ENCODE measurements at regions of chr22 and their contacts with region 1.

Region 1: DNA sequence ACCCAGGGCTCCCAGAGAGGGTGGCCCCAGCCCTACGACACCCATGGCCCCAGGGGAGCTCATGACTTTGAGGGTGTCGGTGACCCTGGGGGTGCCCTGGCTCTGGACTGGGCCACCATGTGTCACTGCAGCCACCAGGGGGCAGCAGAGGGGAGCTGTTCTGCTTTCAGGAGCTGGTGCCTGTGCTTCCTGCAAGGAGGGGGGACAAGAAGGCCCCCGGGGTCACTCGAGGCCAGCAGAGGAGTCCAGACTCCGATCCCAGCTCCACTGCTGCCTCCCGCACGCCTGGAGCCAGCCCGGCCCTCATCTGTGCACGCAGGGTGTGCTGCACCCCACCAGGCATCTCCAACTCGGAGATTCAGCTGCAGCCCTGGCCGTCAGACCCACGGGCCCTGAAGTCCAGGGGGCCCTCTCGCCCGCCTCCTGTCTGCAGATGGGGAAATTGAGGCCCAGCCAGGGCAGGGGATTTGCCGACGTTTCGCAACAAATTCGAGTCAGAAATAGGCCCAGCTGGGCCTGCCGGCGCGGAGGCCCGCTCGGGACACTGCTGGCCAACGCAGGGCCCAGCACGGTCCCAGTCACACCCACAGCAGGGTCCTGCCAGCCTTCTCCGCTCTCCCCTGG is 29.5 kb upstream of the WNT7B start:
- DNase-seq: peak; percentile 80
- H3K4me3 ChIP-seq: no peak overlapping the region
- H3K27ac ChIP-seq: peak overlapping the region; percentile 47
- H3K4me1 ChIP-seq: peaks cover 39% of the 10 kb centered on the region
- H3K27me3 ChIP-seq: no peaks in the 10 kb centered on the region
- CTCF ChIP-seq: peak; percentile 98

Region 2: DNA sequence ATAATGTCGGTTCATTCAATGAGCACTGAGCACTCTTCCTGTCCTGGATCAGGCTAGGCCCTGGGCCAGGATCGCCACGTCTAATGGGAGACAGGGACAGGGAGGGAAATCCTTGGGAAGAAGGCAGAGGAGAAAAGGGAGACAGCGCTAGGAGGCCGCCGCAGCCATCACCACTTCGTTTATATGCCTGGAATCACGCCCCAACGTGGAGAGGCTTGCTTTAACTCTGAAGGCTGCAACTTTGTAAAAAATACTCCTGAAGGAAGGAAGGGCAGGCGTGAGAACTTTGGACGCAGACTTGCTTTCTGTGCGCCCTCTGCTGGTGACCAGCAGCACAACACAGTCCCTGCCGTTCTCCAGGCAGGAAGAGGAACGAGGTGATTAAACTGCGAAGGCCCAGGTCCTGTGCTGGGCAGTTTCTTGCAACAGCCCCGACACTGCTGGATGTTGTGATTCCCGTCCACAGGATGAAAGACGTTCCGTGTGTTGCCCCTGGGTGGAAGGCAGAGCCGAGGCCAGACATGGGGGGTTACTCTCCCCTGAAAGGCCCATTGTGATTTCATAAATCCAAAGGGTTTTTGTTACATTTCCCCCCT is 570.8 kb before region 1 on chr22:
- CTCF ChIA-PET with region 1: no interaction called
- POLR2A ChIA-PET with region 1: no interaction called
- intact Hi-C with region 1: no loop called
- DNase-seq: peak; percentile 89
- H3K4me3 ChIP-seq: no peak overlapping the region
- H3K27ac ChIP-seq: no peak overlapping the region
- H3K4me1 ChIP-seq: peaks cover 4% of the 10 kb centered on the region
- H3K27me3 ChIP-seq: no peaks in the 10 kb centered on the region
- CTCF ChIP-seq: peak; percentile 98

Region 3: GRCh38 chr22:45688606-45689080 is 317.8 kb before region 1 on chr22:
- CTCF ChIA-PET with region 1: no interaction called
- POLR2A ChIA-PET with region 1: no interaction called
- intact Hi-C with region 1: no loop called
- DNase-seq: no peak
- H3K4me3 ChIP-seq: no peak overlapping the region
- H3K27ac ChIP-seq: peak overlapping the region; percentile 17
- H3K4me1 ChIP-seq: peaks cover 20% of the 10 kb centered on the region
- H3K27me3 ChIP-seq: no peaks in the 10 kb centered on the region
- CTCF ChIP-seq: no peak

Region 4: GRCh38 chr22:45994491-45995404 is 11.7 kb before region 1 on chr22:
- CTCF ChIA-PET with region 1: interaction called, 10 read pairs
- POLR2A ChIA-PET with region 1: no interaction called
- intact Hi-C with region 1: no loop called
- DNase-seq: peak; percentile 80
- H3K4me3 ChIP-seq: no peak overlapping the region
- H3K27ac ChIP-seq: no peak overlapping the region
- H3K4me1 ChIP-seq: peaks cover 6% of the 10 kb centered on the region
- H3K27me3 ChIP-seq: no peaks in the 10 kb centered on the region
- CTCF ChIP-seq: peak; percentile 97

Region 5: GRCh38 chr22:46024136-46024840 is 17.8 kb after region 1 on chr22:
- CTCF ChIA-PET with region 1: interaction called, 3 read pairs
- POLR2A ChIA-PET with region 1: interaction called, 10 read pairs
- intact Hi-C with region 1: no loop called
- DNase-seq: no peak
- H3K4me3 ChIP-seq: no peak overlapping the region
- H3K27ac ChIP-seq: no peak overlapping the region
- H3K4me1 ChIP-seq: no peaks in the 10 kb centered on the region
- H3K27me3 ChIP-seq: peaks cover 22% of the 10 kb centered on the region
- CTCF ChIP-seq: no peak

Region 6: DNA sequence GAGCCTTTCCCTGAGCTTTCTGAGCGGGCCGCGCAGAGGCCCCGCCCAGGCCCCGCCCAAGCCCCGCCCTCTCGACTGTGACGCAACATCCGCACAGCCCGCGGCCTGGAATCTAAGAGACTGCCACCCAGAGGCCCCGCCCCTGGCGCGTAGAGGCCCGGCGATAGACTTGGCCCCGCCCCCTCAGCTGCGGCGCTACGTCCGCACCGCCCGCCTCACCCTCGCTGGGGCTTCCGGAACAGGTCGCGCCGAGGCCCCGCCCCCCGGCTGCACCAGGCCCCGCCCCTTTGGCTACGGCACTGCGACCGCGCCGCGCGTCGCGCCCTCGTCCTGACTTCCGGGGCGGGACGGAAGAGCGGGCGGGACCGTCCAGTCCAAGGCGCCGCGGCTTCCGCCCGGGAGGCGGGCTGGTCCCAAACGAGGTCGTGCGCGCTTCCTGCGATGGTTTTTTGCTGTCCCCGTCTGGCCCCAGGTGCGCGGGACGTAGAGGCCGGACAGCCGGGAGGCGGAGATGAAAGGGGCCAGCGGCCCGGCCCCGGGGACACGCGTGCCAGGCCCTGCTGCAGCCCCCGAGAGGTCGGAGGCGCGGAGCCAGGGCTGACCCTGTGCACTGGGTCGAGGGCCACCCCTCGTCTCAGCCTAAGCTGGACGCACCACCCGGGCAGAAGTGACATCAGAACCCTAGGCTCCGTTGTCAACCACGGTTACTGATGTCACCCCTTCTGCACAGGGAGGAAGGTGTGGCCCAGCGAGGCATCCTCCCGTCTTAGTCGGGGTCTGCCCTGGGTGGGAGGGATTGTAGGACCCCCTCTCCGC is 29.5 kb after region 1 on chr22:
- CTCF ChIA-PET with region 1: interaction called, 10 read pairs
- POLR2A ChIA-PET with region 1: no interaction called
- intact Hi-C with region 1: no loop called
- DNase-seq: peak; percentile 99
- H3K4me3 ChIP-seq: peak overlapping the region; percentile 98
- H3K27ac ChIP-seq: peak overlapping the region; percentile 91
- H3K4me1 ChIP-seq: peaks cover 10% of the 10 kb centered on the region
- H3K27me3 ChIP-seq: no peaks in the 10 kb centered on the region
- CTCF ChIP-seq: no peak

Region 7: DNA sequence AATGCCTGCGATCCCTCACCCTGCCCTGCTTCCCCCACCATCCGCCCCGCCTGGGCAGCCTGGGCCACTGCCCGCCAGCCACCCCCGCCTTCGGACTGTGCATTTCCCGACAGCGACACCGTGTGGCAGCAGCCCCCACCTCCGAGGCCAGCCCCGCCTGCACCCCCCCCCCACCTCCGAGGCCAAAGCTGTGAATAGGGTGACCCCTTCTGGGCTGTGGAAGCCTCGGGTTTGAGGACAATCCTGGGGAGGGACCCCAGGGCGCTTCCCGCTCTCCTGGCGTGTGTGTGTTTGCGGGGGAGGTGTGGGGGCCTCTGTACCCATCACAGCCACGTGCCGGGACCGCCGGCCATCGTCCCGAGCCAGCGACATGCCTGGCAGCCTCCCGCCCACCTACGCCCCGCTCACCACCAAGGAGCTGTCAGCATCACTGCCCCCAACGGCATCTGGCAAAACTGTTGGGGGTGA is 110.0 kb after region 1 on chr22:
- CTCF ChIA-PET with region 1: interaction called, 13 read pairs
- POLR2A ChIA-PET with region 1: no interaction called
- intact Hi-C with region 1: loop called (anchors 2 kb)
- DNase-seq: peak; percentile 79
- H3K4me3 ChIP-seq: no peak overlapping the region
- H3K27ac ChIP-seq: no peak overlapping the region
- H3K4me1 ChIP-seq: no peaks in the 10 kb centered on the region
- H3K27me3 ChIP-seq: no peaks in the 10 kb centered on the region
- CTCF ChIP-seq: peak; percentile 89